Activated B cell treated with CpG ODN at 0.5 μM for 24 hours (primary cell): ENCODE measurements at regions of chr17 and their contacts with region 1.

Region 1: GRCh38 chr17:48351831-48352332 is 78.1 kb downstream of the SKAP1 start:
- DNase-seq: no peak
- ATAC-seq: peak; percentile 57
- H3K4me3 Mint-ChIP-seq: no peak overlapping the region
- H3K27ac Mint-ChIP-seq: no peak overlapping the region
- H3K4me1 Mint-ChIP-seq: peaks cover 3% of the 10 kb centered on the region
- H3K27me3 Mint-ChIP-seq: no peaks in the 10 kb centered on the region
- CTCF ChIP-seq: peak; percentile 33

Region 2: GRCh38 chr17:48363161-48363560 is 11.3 kb after region 1 on chr17:
- CTCF ChIA-PET with region 1: interaction called, 14 read pairs
- POLR2A ChIA-PET with region 1: no interaction called
- intact Hi-C with region 1: no loop called
- DNase-seq: no peak
- ATAC-seq: no peak
- H3K4me3 Mint-ChIP-seq: no peak overlapping the region
- H3K27ac Mint-ChIP-seq: no peak overlapping the region
- H3K4me1 Mint-ChIP-seq: peaks cover 11% of the 10 kb centered on the region
- H3K27me3 Mint-ChIP-seq: peaks cover 2% of the 10 kb centered on the region
- CTCF ChIP-seq: no peak

Region 3: DNA sequence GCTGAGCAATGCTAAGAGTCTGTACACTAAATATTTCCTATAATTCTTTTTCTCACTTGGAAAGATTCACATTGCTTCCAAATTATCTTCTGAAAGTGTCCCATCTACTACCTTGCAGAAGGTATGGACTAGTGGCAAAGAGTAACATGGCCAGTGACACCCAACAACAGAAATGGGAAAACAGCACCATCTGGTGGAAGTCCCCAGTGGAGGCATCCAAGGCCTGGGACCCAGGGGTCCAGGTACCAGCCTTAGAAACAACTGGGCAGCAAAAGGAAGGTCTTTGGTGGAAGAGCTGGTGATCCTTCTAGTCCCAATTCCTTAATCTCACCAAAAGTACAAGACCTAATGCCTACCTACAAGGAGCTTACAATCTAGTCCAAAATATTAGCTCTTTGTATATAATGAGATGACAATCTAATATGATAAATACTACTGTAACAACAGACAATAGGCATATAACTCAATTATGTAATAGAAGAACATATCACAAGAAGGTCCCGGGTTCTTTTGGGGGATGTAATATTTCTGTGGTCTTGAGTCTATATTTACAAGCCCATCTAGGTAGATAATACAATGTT is 22.9 kb after region 1 on chr17:
- CTCF ChIA-PET with region 1: interaction called, 7 read pairs
- POLR2A ChIA-PET with region 1: no interaction called
- intact Hi-C with region 1: loop called (anchors 2 kb)
- DNase-seq: no peak
- ATAC-seq: peak; percentile 51
- H3K4me3 Mint-ChIP-seq: no peak overlapping the region
- H3K27ac Mint-ChIP-seq: peak overlapping the region; percentile 80
- H3K4me1 Mint-ChIP-seq: peaks cover 23% of the 10 kb centered on the region
- H3K27me3 Mint-ChIP-seq: no peaks in the 10 kb centered on the region
- CTCF ChIP-seq: no peak

Region 4: GRCh38 chr17:48385319-48385718 is 33.4 kb after region 1 on chr17:
- CTCF ChIA-PET with region 1: no interaction called
- POLR2A ChIA-PET with region 1: no interaction called
- intact Hi-C with region 1: no loop called
- DNase-seq: no peak
- ATAC-seq: no peak
- H3K4me3 Mint-ChIP-seq: no peak overlapping the region
- H3K27ac Mint-ChIP-seq: no peak overlapping the region
- H3K4me1 Mint-ChIP-seq: peaks cover 28% of the 10 kb centered on the region
- H3K27me3 Mint-ChIP-seq: no peaks in the 10 kb centered on the region
- CTCF ChIP-seq: no peak

Region 5: GRCh38 chr17:48492401-48493298 is 140.8 kb after region 1 on chr17:
- CTCF ChIA-PET with region 1: interaction called, 15 read pairs
- POLR2A ChIA-PET with region 1: no interaction called
- intact Hi-C with region 1: no loop called
- DNase-seq: peak; percentile 53
- ATAC-seq: peak; percentile 86
- H3K4me3 Mint-ChIP-seq: peak overlapping the region; percentile 55
- H3K27ac Mint-ChIP-seq: no peak overlapping the region
- H3K4me1 Mint-ChIP-seq: peaks cover 16% of the 10 kb centered on the region
- H3K27me3 Mint-ChIP-seq: peaks cover 21% of the 10 kb centered on the region
- CTCF ChIP-seq: no peak